SK-N-SH (cell line): ENCODE measurements at regions of chr1 and their contacts with region 1.

Region 1: DNA sequence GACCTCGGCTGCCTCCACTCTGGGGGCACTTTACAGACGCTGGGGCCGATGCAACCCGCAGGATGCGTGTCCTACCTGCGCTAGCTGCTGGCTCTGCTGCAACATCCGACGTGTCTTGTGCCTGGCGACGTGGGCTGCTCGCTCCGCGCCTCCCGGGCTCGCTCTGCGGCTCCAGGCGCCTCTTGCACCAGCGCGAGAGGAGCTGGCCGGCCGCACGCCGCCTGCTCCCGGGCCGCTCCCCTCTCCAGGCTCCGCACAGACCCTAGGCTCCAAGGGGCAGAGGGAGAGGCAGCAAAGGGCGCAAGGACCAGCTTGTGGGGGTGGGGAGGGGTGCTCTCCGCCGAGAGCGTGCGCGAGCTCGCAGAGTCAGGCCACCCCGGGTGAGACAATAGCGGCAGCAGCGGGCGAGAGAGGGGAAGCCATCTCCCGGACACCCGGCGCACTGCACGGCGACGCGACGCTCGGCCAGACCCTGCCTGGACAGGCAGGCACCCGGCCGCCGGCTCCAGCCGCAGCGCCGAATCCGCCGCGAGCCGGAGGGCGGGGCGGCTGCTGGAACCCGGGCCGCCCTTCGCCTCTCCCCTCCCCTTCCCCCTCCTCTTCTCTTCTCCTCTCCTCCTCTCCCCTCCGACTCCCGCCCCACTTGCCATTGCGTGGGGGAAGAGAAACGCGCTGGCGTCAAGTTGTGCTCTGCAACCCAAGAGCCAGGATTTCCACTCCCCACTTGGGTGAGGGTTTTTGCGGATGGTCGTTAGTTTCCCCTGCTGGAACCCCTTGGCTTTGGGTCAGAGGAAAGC is at the start of gene PIK3C2B:
- DNase-seq: peak; percentile 97
- H3K4me3 ChIP-seq: peak within 1 kb of the TSS; percentile 72 to 79
- H3K27ac ChIP-seq: peak within 1 kb of the TSS; percentile 70 to 90
- H3K4me1 ChIP-seq: peaks cover 0 to 15% of the 10 kb centered on the region in 2 experiments; a peak in 3 of 4 replicates
- H3K27me3 ChIP-seq: no peaks in the 10 kb centered on the region
- CTCF ChIP-seq: peak; percentile 43
- EP300 ChIP-seq: no peak
- RAD21 ChIP-seq: peak; percentile 26
- polyA plus RNA-seq, gene PIK3C2B: 6.5 and 6.6 TPM in 2 replicates

Region 2: GRCh38 chr1:204438628-204439027 is 55.9 kb before region 1 on chr1:
- CTCF ChIA-PET with region 1: interaction called, 1,005 read pairs
- POLR2A ChIA-PET with region 1: interaction called, 11 read pairs
- DNase-seq: no peak
- H3K4me3 ChIP-seq: no peak overlapping the region
- H3K27ac ChIP-seq: peak overlapping the region; percentile 87 to 96
- H3K4me1 ChIP-seq: peaks cover 15 to 22% of the 10 kb centered on the region in 2 experiments
- H3K27me3 ChIP-seq: no peaks in the 10 kb centered on the region
- CTCF ChIP-seq: no peak
- EP300 ChIP-seq: peak in 1 of 2 experiments; percentile 93; a peak in 2 of 4 replicates
- RAD21 ChIP-seq: no peak

Region 3: DNA sequence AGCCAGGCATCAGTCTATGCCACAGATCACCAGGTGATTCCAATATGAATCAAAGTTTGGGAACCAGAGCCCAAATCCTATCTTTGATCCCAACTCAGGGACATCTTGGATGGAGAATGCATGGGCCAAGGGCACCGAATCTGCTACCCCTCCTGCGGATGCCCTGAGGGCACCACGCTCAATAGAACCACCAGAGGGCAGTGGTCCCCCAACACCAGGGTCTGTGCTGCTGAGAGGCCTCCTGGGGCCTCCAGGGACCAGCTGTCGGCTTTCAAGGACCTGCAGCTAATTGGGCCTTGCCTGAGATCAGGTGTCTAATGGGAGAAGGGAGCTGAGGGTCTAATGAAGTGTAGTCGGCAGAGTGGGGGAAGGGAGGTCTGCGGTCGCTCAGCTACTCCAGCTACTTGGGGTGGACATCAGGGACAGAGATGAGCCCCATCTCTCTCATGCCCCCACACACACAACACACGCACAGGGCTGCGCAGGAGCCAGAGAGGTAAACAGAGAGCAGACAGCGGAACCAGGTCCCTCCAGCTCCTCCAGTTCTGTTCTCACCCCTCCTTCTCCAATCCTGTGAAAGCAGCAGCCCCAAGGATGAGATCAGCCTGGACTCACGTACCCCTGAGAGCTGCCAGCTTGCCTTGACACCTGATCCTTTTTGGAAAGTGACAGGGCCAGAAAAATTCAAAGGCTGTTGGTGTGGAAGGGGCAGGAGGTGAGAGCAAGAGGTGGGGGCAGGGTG is 47.9 kb before region 1 on chr1:
- CTCF ChIA-PET with region 1: interaction called, 1,005 read pairs
- POLR2A ChIA-PET with region 1: interaction called, 3 read pairs
- DNase-seq: peak; percentile 82
- H3K4me3 ChIP-seq: no peak overlapping the region; a peak in 1 of 4 replicates
- H3K27ac ChIP-seq: no peak overlapping the region
- H3K4me1 ChIP-seq: no peaks in the 10 kb centered on the region; a peak in 1 of 4 replicates
- H3K27me3 ChIP-seq: no peaks in the 10 kb centered on the region
- CTCF ChIP-seq: peak; percentile 74
- EP300 ChIP-seq: no peak
- RAD21 ChIP-seq: peak; percentile 72

Region 4: GRCh38 chr1:204465546-204466415 is 28.7 kb before region 1 on chr1:
- CTCF ChIA-PET with region 1: interaction called, 10 read pairs
- POLR2A ChIA-PET with region 1: interaction called, 6 read pairs
- DNase-seq: peak; percentile 46
- H3K4me3 ChIP-seq: no peak overlapping the region
- H3K27ac ChIP-seq: no peak overlapping the region
- H3K4me1 ChIP-seq: peaks cover 0 to 12% of the 10 kb centered on the region in 2 experiments; a peak in 1 of 4 replicates
- H3K27me3 ChIP-seq: no peaks in the 10 kb centered on the region
- CTCF ChIP-seq: no peak
- EP300 ChIP-seq: no peak
- RAD21 ChIP-seq: no peak

Region 5: GRCh38 chr1:204480515-204480914 is 14.0 kb before region 1 on chr1:
- CTCF ChIA-PET with region 1: interaction called, 21 read pairs
- POLR2A ChIA-PET with region 1: interaction called, 4 read pairs
- DNase-seq: no peak
- H3K4me3 ChIP-seq: no peak overlapping the region
- H3K27ac ChIP-seq: no peak overlapping the region
- H3K4me1 ChIP-seq: peaks cover 0 to 13% of the 10 kb centered on the region in 2 experiments; a peak in 3 of 4 replicates
- H3K27me3 ChIP-seq: no peaks in the 10 kb centered on the region
- CTCF ChIP-seq: no peak
- EP300 ChIP-seq: no peak
- RAD21 ChIP-seq: no peak

Region 6: DNA sequence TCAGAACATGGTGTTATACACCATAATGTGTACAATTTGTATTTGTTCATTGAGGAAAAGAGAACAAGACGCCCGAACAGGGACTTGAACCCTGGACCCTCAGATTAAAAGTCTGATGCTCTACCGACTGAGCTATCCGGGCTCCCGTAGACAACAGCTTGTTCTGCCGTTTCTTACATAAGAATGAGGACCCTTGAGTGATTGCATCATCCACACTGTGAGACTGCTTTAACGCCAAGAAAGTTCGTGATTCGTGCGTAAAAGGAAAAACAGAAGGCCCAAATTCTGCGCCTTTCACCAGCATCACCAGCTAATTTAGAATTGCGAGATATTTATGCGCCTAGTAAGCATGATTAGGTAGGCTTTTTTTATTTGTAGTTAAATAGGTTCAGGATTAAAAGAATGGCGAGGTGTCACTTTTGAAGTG is 12.5 kb after region 1 on chr1:
- CTCF ChIA-PET with region 1: interaction called, 76 read pairs
- POLR2A ChIA-PET with region 1: interaction called, 11 read pairs
- DNase-seq: peak; percentile 43
- H3K4me3 ChIP-seq: peak overlapping the region; percentile 44 to 72
- H3K27ac ChIP-seq: peak overlapping the region; percentile 92 to 95
- H3K4me1 ChIP-seq: peaks cover 3 to 5% of the 10 kb centered on the region in 2 experiments; a peak in 2 of 4 replicates
- H3K27me3 ChIP-seq: no peaks in the 10 kb centered on the region
- CTCF ChIP-seq: no peak
- EP300 ChIP-seq: peak in 1 of 2 experiments; percentile 62; a peak in 1 of 4 replicates
- RAD21 ChIP-seq: no peak

Region 7: DNA sequence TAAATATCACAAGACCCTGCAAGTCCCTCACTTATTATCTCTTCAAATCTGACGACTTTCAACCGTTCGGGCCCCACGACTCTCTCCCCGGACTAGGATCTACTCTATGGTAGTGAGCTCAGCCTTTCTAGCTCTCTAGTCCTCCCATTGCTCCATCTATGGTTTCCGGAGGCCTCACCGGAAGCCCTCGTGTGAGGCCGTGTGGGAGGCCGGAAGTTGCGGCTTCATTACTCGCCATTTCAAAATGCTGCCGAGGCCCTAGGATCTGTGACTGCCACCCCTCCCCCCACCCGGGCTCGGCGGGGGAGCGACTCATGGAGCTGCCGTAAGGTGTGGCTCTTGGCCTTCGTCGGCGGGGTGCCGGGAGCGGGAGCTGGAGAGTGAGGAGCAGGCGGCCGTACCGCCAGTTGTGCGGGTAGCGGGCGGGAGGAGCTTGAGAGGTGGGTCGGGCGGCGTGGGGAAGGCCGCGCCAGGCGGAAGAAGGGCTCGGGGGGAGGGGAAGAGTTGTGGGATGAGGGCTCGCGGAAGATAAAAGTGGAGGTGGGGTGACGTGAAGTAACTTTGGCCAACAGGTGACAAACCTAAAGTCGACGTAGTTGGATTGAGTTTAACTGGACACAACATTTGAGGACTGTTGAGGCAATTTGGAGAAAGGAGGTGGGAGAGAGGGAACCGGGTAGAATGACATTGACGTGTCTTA is 21.9 kb after region 1 on chr1 and contains the start of gene MDM4:
- CTCF ChIA-PET with region 1: interaction called, 4 read pairs
- POLR2A ChIA-PET with region 1: interaction called, 13 read pairs
- DNase-seq: peak; percentile 92
- H3K4me3 ChIP-seq: peak within 1 kb of the TSS; percentile 61 to 73
- H3K27ac ChIP-seq: peak within 1 kb of the TSS; percentile 90
- H3K4me1 ChIP-seq: peaks cover 4 to 8% of the 10 kb centered on the region in 2 experiments; a peak in 1 of 4 replicates
- H3K27me3 ChIP-seq: no peaks in the 10 kb centered on the region
- CTCF ChIP-seq: no peak
- EP300 ChIP-seq: 0 out of 4 replicates have a peak, but pooled peaks of 1 of the 2 experiments have one; percentile 24
- RAD21 ChIP-seq: no peak
- polyA plus RNA-seq, gene MDM4: 6.2 and 9.2 TPM in 2 replicates

Region 8: DNA sequence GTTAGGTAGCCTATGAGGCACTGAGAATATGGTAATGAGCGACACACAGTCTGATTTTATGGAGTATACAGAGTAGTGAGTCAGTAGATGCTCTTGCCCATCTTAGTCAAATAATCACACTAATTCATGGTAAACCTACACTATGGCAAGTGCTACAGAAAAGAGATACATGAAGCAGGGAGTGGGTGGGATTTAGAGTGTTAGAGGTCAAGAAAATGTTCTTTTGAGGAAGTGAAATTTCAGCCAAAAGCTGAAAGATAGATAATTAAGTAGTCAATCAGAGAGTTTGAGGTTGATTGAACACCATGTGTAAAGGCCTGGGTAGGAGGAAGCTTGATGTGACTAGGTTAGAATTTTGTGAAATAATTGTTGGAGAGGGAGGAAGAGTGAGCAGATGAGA is 36.5 kb after region 1 on chr1:
- CTCF ChIA-PET with region 1: no interaction called
- POLR2A ChIA-PET with region 1: no interaction called
- DNase-seq: no peak
- H3K4me3 ChIP-seq: no peak overlapping the region
- H3K27ac ChIP-seq: no peak overlapping the region
- H3K4me1 ChIP-seq: no peaks in the 10 kb centered on the region
- H3K27me3 ChIP-seq: no peaks in the 10 kb centered on the region
- CTCF ChIP-seq: no peak
- EP300 ChIP-seq: no peak
- RAD21 ChIP-seq: no peak